Activated CD8-positive, alpha-beta T cell treated with anti-CD3 and anti-CD28 coated beads, Interleukin-2, amount 10 ng/mL, durations not matched to agents 7 days and 5 days (primary cell): ENCODE measurements at regions of chr6 and their contacts with region 1.

Region 1: GRCh38 chr6:122751326-122751725 is 28.2 kb upstream of the FABP7 start:
- DNase-seq: no peak
- ATAC-seq: peak; percentile 86
- H3K4me3 Mint-ChIP-seq: no peak overlapping the region
- H3K27ac Mint-ChIP-seq: peak overlapping the region; percentile 70
- H3K4me1 Mint-ChIP-seq: peaks cover 42% of the 10 kb centered on the region
- H3K27me3 Mint-ChIP-seq: no peaks in the 10 kb centered on the region

Region 2: DNA sequence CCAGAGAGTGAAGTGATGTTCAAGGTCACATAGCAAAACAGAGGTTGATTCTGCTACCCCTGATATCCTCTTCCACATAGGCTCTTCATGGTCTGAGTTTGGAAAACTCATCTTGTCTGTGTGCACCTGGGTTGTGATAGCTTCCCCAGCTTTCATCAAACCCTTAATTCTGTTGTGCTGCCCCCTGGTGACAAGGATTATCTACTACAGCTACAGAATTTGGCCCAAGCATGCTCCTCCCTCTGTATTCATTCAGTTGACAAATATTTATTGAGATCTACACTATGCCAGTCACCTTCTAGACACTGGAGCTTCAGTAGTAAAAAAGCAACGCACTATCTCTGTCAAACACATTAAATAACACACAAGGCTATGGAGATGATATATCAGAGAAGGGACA is 88.2 kb after region 1 on chr6:
- CTCF ChIA-PET with region 1: interaction called, 37 read pairs
- POLR2A ChIA-PET with region 1: no interaction called
- DNase-seq: peak; percentile 70
- ATAC-seq: peak; percentile 60
- H3K4me3 Mint-ChIP-seq: no peak overlapping the region
- H3K27ac Mint-ChIP-seq: no peak overlapping the region
- H3K4me1 Mint-ChIP-seq: no peaks in the 10 kb centered on the region
- H3K27me3 Mint-ChIP-seq: peaks cover 5% of the 10 kb centered on the region

Region 3: GRCh38 chr6:122956376-122956775 is 205.1 kb after region 1 on chr6:
- CTCF ChIA-PET with region 1: no interaction called
- POLR2A ChIA-PET with region 1: no interaction called
- DNase-seq: no peak
- ATAC-seq: no peak
- H3K4me3 Mint-ChIP-seq: no peak overlapping the region
- H3K27ac Mint-ChIP-seq: no peak overlapping the region
- H3K4me1 Mint-ChIP-seq: no peaks in the 10 kb centered on the region
- H3K27me3 Mint-ChIP-seq: no peaks in the 10 kb centered on the region